ENCODE measurements at regions of chr3 and their contacts with region 1.

Region 1: DNA sequence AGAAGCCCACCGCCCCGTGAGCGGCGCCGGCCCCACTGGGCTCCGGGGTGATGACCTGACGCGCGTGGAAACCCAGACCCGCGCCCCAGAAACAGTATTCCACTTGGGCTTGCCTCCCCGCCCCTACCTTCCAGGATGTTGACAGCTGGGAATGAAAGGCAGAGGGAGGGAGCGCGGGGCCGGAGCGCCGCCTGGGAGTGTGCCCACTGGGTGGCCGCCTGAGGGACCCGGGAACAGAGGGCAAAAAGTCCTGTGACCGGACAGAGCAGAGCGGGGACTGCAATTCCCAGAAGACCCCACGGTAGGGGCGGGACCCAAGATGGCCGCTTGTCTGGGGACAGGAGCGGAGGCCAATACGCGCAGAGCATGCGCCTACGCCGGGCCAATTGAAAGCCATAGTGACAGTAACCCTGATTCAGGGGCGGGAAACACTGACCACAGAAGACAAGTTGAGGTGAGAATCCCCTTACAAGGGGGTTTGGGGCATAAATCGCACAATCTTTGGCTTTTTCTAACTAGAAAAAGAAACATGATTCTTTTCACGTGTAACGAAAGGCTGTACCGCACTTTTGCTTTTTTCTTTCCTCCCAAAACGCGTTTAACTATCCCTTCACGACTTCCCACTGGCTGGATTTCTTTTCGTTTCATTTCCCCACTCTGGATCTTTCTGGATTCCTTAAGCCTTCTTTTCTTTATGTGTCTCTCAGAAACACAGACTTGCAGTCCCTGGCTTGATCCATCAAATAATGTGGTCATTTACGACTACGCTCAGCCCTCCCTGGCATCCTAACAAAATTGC is at the start of gene FHIT:
- DNase-seq: peak; percentile 95
- H3K4me3 ChIP-seq: peak within 1 kb of the TSS; percentile 62 to 99 (median 94)
- H3K27ac ChIP-seq: peak within 1 kb of the TSS; percentile 65
- H3K4me1 ChIP-seq: peaks cover 31% of the 10 kb centered on the region
- H3K27me3 ChIP-seq: no peaks in the 10 kb centered on the region
- CTCF ChIP-seq: no peak
- POLR2A ChIP-seq: no peak
- total RNA-seq, gene FHIT: 2.2 and 3.1 TPM in 2 replicates

Region 2: DNA sequence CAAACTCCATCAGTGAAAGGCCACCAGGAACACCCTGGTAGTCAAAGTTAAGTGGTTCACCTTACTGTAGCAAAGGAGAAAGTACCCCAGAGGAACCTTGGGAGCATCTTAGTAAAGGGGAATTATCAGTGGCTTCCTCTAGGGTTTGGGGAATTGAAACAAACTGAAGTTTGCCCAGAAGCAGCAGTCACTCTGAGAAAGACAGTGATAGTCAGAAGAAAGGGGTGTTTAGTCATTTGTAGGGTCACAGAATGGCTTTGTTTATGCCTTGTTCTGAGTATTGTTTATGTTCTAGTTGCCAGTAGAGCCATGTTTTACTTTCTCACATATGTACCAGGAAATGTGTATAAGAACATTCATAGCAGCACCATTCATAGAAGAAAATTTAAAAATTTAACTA is 94.0 kb before region 1 on chr3:
- CTCF ChIA-PET with region 1: no interaction called
- POLR2A ChIA-PET with region 1: no interaction called
- dilution Hi-C with region 1: no loop called
- intact Hi-C with region 1: loop called (anchors 2 kb)
- DNase-seq: no peak
- H3K4me3 ChIP-seq: no peak overlapping the region
- H3K27ac ChIP-seq: no peak overlapping the region
- H3K4me1 ChIP-seq: no peaks in the 10 kb centered on the region
- H3K27me3 ChIP-seq: no peaks in the 10 kb centered on the region
- CTCF ChIP-seq: no peak
- POLR2A ChIP-seq: no peak